ENCODE measurements at regions of chr9 and their contacts with region 1.

Region 1: DNA sequence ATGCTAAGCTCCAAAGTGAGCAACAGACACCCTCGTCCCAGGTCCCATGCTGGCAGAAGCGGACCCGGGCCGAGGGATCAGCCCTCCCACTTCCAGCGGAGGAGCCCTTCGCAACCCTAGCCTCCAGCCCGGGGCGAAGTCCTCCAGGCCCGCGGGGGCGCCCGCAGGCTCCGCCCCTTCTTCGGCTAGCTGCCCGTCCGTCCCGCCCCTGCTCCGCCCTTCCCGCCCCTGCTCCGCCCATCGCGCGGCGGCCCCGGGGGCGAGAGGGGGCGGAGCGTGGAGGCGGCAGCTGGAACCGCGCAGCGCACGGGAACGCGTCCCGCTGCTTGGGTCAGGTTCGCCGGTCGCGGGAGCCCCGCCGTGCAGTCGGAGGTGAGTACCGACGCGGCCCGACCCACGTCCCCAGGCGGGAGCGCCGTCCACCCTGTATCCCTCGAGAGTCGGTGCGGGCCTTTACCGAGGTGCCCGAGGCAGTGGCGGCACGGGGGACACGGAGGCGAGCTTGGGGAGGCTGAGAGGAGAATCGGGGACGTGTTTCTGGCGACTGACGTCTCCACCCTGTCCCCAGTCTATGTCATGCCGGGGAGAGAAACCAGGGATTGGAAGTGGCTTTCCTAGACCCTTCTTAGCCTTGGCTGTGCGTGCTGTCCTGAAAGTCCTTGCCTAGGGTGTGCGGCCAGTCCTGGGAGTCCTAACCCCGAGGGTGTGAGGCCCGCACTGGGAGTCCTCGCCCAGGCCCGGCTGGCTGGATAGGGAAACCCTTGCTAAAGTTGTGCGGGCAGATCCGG is at the start of gene ACO1:
- DNase-seq: peak; percentile 92 to 95
- ATAC-seq: peak; percentile 98 to 99 (median 98)
- H3K4me3 ChIP-seq: peak within 1 kb of the TSS; percentile 73
- H3K27ac ChIP-seq: peak within 1 kb of the TSS; percentile 83
- H3K4me1 ChIP-seq: peaks cover 12% of the 10 kb centered on the region
- H3K27me3 ChIP-seq: no peaks in the 10 kb centered on the region
- CTCF ChIP-seq: no peak
- total RNA-seq, gene ACO1: 27.2 to 39.4 (median 32.3) TPM

Region 2: GRCh38 chr9:32526041-32526706 is 141.6 kb after region 1 on chr9 and contains the start of gene RIGI:
- intact Hi-C with region 1: loop called (anchors 2 to 5 kb)
- DNase-seq: peak; percentile 92
- ATAC-seq: peak; percentile 88 to 94 (median 92)
- H3K4me3 ChIP-seq: peak within 1 kb of the TSS; percentile 72
- H3K27ac ChIP-seq: peak within 1 kb of the TSS; percentile 64
- H3K4me1 ChIP-seq: peaks cover 21% of the 10 kb centered on the region
- H3K27me3 ChIP-seq: no peaks in the 10 kb centered on the region
- CTCF ChIP-seq: peak; percentile 44
- total RNA-seq, gene RIGI: 3.3 to 4.4 (median 3.7) TPM

Region 3: GRCh38 chr9:32571969-32572899 is 187.7 kb after region 1 on chr9:
- intact Hi-C with region 1: loop called (anchors 1 kb)
- DNase-seq: peak in 1 of 2 donors; percentile 46
- ATAC-seq: peak; percentile 84 to 91 (median 87)
- H3K4me3 ChIP-seq: peak overlapping the region; percentile 91
- H3K27ac ChIP-seq: peak overlapping the region; percentile 92
- H3K4me1 ChIP-seq: peaks cover 19% of the 10 kb centered on the region
- H3K27me3 ChIP-seq: no peaks in the 10 kb centered on the region
- CTCF ChIP-seq: peak; percentile 61

Measured in psoas muscle (tissue), 8 donors.